ENCODE measurements at regions of chr5 and their contacts with region 1.

Region 1: DNA sequence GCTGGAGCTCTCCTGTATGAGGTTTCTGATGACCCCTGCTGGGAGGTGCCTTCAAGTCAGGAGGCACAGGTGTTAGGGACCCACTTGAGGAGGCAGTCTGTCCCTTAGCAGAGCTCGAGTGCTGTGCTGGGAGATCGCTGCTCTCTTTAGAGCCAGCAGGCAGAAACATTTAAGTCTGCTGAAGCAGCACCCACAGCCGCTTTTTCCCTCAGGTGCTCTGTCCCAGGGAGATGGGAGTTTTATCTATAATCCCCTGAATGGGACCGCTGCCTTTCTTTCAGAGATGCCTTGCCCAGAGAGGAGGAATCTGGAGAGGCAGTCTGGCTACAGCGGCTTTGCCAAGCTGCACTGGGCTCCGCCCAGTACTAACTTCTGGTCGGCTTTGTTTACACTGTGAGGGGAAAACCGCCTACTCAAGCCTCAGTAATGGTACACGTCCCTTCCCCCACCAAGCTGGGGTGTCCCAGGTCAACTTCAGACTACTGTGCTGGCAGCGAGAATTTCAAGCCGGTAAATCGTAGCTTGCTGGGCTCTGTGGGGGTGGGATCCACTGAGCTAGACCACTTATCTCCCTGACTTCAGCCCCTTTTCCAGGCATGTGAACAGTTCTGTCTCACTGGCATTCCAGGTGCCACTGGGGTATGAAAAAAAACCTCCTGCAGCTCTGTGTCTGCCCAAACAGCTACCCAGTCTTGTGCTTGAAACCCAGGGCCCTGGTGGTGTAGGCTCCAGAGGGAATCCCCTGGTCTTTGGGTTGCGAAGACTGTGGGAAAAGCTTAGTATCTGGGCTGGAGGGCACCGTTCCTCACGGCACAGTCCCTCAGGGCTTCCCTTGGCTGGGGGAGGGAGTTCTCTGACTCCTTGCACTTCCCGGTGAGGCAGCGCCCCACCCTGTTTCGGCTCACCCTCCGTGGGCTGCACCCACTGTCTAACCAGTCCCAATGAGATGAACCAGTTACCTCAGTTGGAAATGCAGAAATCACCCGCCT is 171.1 kb downstream of the CWC27 start:
- DNase-seq: peak; percentile 62 to 65
- H3K4me3 ChIP-seq: peak overlapping the region; percentile 36; the same call in 1 of the 2 replicates
- H3K27ac ChIP-seq: peak overlapping the region; percentile 62
- H3K4me1 ChIP-seq: no peaks in the 10 kb centered on the region
- H3K27me3 ChIP-seq: no peaks in the 10 kb centered on the region
- CTCF ChIP-seq: no peak

Region 2: DNA sequence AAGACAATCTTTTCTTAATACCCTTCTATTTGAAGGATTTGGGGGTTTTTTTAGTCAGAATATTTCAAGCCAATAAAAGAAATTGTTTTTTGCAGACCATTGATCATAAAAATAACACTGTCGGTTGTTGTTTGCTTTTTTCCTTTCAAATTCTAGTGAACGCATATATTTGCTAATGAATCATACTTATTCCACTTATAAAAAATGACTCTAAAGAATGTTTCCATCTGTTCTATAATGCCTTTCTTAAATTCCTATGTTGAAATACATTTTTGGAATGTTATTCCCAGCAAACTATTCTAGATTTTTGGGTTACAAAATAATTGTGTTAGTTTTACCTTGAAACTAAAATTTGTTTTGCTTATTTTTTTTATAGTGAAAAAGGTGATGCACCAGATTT is 138.9 kb before region 1 on chr5:
- CTCF ChIA-PET with region 1: no interaction called
- POLR2A ChIA-PET with region 1: no interaction called
- intact Hi-C with region 1: no loop called
- DNase-seq: no peak
- H3K4me3 ChIP-seq: no peak overlapping the region
- H3K27ac ChIP-seq: no peak overlapping the region
- H3K4me1 ChIP-seq: no peaks in the 10 kb centered on the region
- H3K27me3 ChIP-seq: no peaks in the 10 kb centered on the region
- CTCF ChIP-seq: no peak

Region 3: DNA sequence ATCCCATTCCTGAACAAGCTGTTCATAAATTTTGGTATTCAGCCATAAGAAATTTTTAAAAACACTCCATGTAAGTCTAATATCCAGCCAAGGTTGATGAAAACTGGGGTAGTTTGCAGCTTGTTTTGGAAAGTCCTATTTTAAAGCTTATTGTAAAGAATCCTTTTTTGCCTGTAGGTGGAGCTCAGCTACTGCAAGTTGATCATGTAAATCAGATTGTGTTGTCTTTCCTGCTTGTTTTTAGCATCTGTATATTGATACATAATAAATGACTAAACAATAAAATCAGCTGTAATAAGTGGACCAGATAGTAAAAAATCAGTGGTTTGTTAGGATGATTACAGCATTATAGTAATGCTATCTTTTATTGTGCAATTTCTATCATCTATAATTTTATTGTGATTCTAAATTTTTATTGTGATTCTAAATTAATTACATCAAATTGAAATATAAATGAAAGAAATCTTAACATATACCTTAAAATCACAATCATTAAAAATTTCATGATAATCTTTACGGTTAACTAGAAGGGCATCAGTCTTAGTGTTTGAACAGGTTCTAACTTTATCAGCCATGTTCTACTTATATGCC is 128.7 kb before region 1 on chr5:
- CTCF ChIA-PET with region 1: interaction called, 3 read pairs
- POLR2A ChIA-PET with region 1: no interaction called
- intact Hi-C with region 1: loop called (anchors 5 kb)
- DNase-seq: no peak
- H3K4me3 ChIP-seq: no peak overlapping the region
- H3K27ac ChIP-seq: no peak overlapping the region
- H3K4me1 ChIP-seq: no peaks in the 10 kb centered on the region
- H3K27me3 ChIP-seq: no peaks in the 10 kb centered on the region
- CTCF ChIP-seq: peak; percentile 82

Region 4: GRCh38 chr5:64818245-64818644 is 121.6 kb before region 1 on chr5:
- CTCF ChIA-PET with region 1: interaction called, 10 read pairs
- POLR2A ChIA-PET with region 1: no interaction called
- intact Hi-C with region 1: loop called (anchors 5 kb)
- DNase-seq: no peak
- H3K4me3 ChIP-seq: no peak overlapping the region
- H3K27ac ChIP-seq: no peak overlapping the region
- H3K4me1 ChIP-seq: no peaks in the 10 kb centered on the region
- H3K27me3 ChIP-seq: no peaks in the 10 kb centered on the region
- CTCF ChIP-seq: no peak